GM12878 (cell line): ENCODE measurements at regions of chr10 and their contacts with region 1.

Region 1: GRCh38 chr10:11270135-11270857 is 252.6 kb downstream of the CELF2 start:
- DNase-seq: peak; percentile 60
- ATAC-seq: peak; percentile 97
- H3K4me3 ChIP-seq: peak overlapping the region; percentile 20; the same call in 1 of the 2 replicates
- H3K27ac ChIP-seq: peak overlapping the region; percentile 76
- H3K4me1 ChIP-seq: peaks cover 52% of the 10 kb centered on the region
- H3K27me3 ChIP-seq: no peaks in the 10 kb centered on the region
- CTCF ChIP-seq: peak; percentile 98 to 99 (median 99); a peak in 5 of 6 replicates
- EP300 ChIP-seq: no peak
- POLR2A ChIP-seq: peak; percentile 76
- RAD21 ChIP-seq: peak; percentile 98

Region 2: DNA sequence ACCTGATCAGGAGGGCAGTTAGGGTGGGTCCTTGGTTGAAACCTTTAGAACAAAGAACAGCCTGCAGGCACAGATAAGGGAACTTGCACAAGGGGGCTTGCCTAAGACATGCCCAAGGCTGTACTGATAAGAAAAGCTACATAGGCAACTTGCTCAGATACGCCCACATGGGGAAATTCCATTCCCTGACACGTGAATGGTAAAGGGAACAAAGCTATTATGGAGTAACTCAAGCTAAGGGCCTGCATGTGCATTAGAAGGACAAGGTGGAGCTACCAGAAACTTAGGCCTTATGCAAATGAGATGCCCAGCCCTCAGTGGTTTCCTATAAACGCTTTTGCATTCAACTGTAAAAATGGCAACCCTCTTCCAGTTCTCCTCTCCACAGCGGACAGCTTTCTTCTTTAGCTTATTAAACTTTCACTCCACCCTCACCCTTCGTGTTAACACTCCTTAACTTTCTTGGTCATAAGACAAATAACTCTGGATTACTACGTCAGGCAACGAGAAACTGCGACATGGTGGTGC is 1444.7 kb before region 1 on chr10:
- CTCF ChIA-PET with region 1: no interaction called
- POLR2A ChIA-PET with region 1: no interaction called
- RAD21 ChIA-PET with region 1: no interaction called
- SMC1A ChIA-PET with region 1: no interaction called
- in situ Hi-C with region 1: no loop called
- intact Hi-C with region 1: no loop called
- DNase-seq: no peak
- ATAC-seq: peak; percentile 59
- H3K4me3 ChIP-seq: no peak overlapping the region
- H3K27ac ChIP-seq: no peak overlapping the region
- H3K4me1 ChIP-seq: no peaks in the 10 kb centered on the region
- H3K27me3 ChIP-seq: no peaks in the 10 kb centered on the region
- CTCF ChIP-seq: no peak
- EP300 ChIP-seq: no peak
- POLR2A ChIP-seq: no peak
- RAD21 ChIP-seq: no peak

Region 3: DNA sequence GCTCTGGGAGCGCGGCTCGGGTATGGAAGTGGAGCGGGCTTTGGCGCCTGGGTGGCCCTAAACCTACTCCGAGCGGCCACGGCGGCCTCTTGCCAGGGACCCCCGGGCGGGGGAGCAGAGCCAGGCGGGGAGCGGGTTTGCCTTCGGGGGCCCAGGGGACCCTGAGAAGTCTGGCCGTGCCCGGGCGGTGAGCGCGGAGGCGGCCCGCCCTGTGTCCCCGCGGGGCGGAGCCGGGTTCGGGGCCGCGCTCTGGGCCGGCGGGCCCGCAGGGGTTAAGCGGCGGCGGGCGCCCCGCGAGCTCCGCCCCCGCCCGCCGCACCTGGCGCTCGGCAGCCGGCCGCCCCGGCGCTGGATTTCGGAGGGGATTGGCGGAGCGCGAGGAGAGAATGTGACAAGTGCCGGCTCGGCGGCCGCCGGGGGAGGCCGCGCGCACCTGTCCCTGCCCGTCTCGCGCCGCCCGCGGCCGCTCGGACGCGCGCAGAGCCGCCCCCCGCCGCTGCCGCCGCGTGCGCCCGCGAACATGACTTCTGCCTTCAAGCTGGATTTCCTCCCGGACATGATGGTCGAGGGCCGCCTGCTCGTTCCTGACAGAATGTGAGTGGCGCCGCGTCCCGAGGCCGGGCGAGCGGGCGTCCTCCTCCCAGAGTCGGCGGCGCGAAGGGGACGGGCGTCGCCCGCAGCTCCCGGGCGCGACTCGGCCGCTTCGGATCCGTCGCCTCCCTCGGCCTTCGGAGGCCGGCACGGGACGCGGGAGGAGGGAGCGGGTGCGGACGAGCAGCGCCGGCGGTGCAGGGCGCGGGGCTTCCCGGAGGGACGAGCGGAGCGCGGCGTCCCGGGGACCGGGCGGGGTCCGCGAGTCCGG is 252.5 kb before region 1 on chr10 and contains the start of gene CELF2:
- CTCF ChIA-PET with region 1: interaction called, 4 read pairs
- POLR2A ChIA-PET with region 1: no interaction called
- RAD21 ChIA-PET with region 1: no interaction called
- SMC1A ChIA-PET with region 1: no interaction called
- in situ Hi-C with region 1: no loop called
- intact Hi-C with region 1: loop called (anchors 10 kb)
- DNase-seq: no peak
- ATAC-seq: peak; percentile 77
- H3K4me3 ChIP-seq: peak within 1 kb of the TSS; percentile 67; the same call in 1 of the 2 replicates
- H3K27ac ChIP-seq: no peak within 1 kb of the TSS
- H3K4me1 ChIP-seq: no peaks in the 10 kb centered on the region
- H3K27me3 ChIP-seq: peaks cover 2 to 25% of the 10 kb centered on the region in 2 experiments; a peak in 3 of 4 replicates
- CTCF ChIP-seq: no peak
- EP300 ChIP-seq: no peak
- POLR2A ChIP-seq: 0 out of 2 replicates have a peak, but pooled peaks have one; percentile 23
- RAD21 ChIP-seq: no peak
- polyA plus RNA-seq, gene CELF2: 20.8 to 27.1 TPM

Region 4: GRCh38 chr10:11145495-11145855 is 124.8 kb before region 1 on chr10:
- CTCF ChIA-PET with region 1: interaction called, 39 read pairs
- POLR2A ChIA-PET with region 1: interaction called, 3 read pairs
- RAD21 ChIA-PET with region 1: interaction called, 22 read pairs
- SMC1A ChIA-PET with region 1: interaction called, 23 read pairs
- in situ Hi-C with region 1: no loop called
- intact Hi-C with region 1: no loop called
- DNase-seq: no peak
- ATAC-seq: peak; percentile 92
- H3K4me3 ChIP-seq: peak overlapping the region; percentile 25; the same call in 1 of the 2 replicates
- H3K27ac ChIP-seq: peak overlapping the region; percentile 68
- H3K4me1 ChIP-seq: peaks cover 16% of the 10 kb centered on the region
- H3K27me3 ChIP-seq: no peaks in the 10 kb centered on the region
- CTCF ChIP-seq: no peak
- EP300 ChIP-seq: no peak
- POLR2A ChIP-seq: peak; percentile 25; the same call in 1 of the 2 replicates
- RAD21 ChIP-seq: no peak

Region 5: GRCh38 chr10:11178606-11179515 is 91.4 kb before region 1 on chr10:
- CTCF ChIA-PET with region 1: interaction called, 114 read pairs
- POLR2A ChIA-PET with region 1: interaction called, 11 read pairs
- RAD21 ChIA-PET with region 1: interaction called, 53 read pairs
- SMC1A ChIA-PET with region 1: interaction called, 87 read pairs
- in situ Hi-C with region 1: no loop called
- intact Hi-C with region 1: loop called (anchors 1 kb)
- DNase-seq: peak; percentile 98
- ATAC-seq: peak; percentile 85
- H3K4me3 ChIP-seq: peak overlapping the region; percentile 57
- H3K27ac ChIP-seq: peak overlapping the region; percentile 95
- H3K4me1 ChIP-seq: peaks cover 71% of the 10 kb centered on the region
- H3K27me3 ChIP-seq: no peaks in the 10 kb centered on the region
- CTCF ChIP-seq: no peak
- EP300 ChIP-seq: peak; percentile 95 to 99
- POLR2A ChIP-seq: 0 out of 2 replicates have a peak, but pooled peaks have one; percentile 46
- RAD21 ChIP-seq: 0 out of 2 replicates have a peak, but pooled peaks have one; percentile 2

Region 6: GRCh38 chr10:11225935-11226334 is 44.4 kb before region 1 on chr10:
- CTCF ChIA-PET with region 1: interaction called, 22 read pairs
- POLR2A ChIA-PET with region 1: no interaction called
- RAD21 ChIA-PET with region 1: interaction called, 15 read pairs
- SMC1A ChIA-PET with region 1: interaction called, 4 read pairs
- in situ Hi-C with region 1: no loop called
- intact Hi-C with region 1: no loop called
- DNase-seq: no peak
- ATAC-seq: peak; percentile 79
- H3K4me3 ChIP-seq: 0 out of 2 replicates have a peak overlapping the region, but pooled peaks have one; percentile 8
- H3K27ac ChIP-seq: peak overlapping the region; percentile 77
- H3K4me1 ChIP-seq: peaks cover 62% of the 10 kb centered on the region
- H3K27me3 ChIP-seq: no peaks in the 10 kb centered on the region
- CTCF ChIP-seq: no peak
- EP300 ChIP-seq: 0 out of 4 replicates have a peak, but pooled peaks of 1 of the 2 experiments have one; percentile 23
- POLR2A ChIP-seq: no peak
- RAD21 ChIP-seq: no peak

Region 7: DNA sequence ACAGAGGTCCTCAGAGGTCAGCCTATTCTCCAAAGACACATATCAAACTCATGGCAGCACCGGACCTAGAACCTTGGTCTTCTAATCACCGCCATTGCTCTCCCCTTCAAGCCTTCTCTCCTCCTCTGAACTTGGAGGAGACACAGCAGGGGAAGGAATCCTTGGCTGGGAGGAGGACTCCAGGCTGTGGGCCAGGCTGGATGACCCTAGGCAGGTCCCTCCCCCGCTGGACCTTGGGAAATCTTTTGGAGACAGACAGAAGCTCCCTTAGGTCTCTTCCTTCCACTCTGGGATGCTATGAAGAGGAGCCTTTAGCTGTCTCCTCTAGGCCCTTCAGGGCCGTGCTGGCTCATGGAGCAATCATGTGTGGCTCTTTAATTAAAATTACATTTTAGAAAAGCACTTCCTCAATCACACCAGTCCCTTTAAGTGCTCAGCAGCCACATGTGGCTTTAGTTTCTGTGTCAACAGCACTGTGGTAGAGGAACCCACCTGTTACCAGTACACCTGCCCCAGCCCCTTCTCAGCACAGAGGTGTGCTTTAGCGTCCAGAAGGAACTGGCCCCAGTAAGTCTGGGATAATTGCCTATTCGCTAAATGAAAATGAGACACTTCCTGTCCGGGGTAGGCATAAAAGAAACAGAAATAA is 14.4 kb before region 1 on chr10:
- CTCF ChIA-PET with region 1: interaction called, 26 read pairs
- POLR2A ChIA-PET with region 1: interaction called, 3 read pairs
- RAD21 ChIA-PET with region 1: interaction called, 30 read pairs
- SMC1A ChIA-PET with region 1: interaction called, 22 read pairs
- in situ Hi-C with region 1: no loop called
- intact Hi-C with region 1: no loop called
- DNase-seq: no peak
- ATAC-seq: peak; percentile 68
- H3K4me3 ChIP-seq: no peak overlapping the region
- H3K27ac ChIP-seq: peak overlapping the region; percentile 54
- H3K4me1 ChIP-seq: peaks cover 47% of the 10 kb centered on the region
- H3K27me3 ChIP-seq: no peaks in the 10 kb centered on the region
- CTCF ChIP-seq: no peak
- EP300 ChIP-seq: peak in 1 of 2 experiments; percentile 22; a peak in 1 of 4 replicates
- POLR2A ChIP-seq: no peak; the same call in 1 of the 2 replicates
- RAD21 ChIP-seq: no peak

Region 8: GRCh38 chr10:11318826-11319599 is 48.7 kb after region 1 on chr10:
- CTCF ChIA-PET with region 1: no interaction called
- POLR2A ChIA-PET with region 1: no interaction called
- RAD21 ChIA-PET with region 1: no interaction called
- SMC1A ChIA-PET with region 1: no interaction called
- in situ Hi-C with region 1: no loop called
- intact Hi-C with region 1: no loop called
- DNase-seq: no peak
- ATAC-seq: no peak
- H3K4me3 ChIP-seq: no peak overlapping the region
- H3K27ac ChIP-seq: no peak overlapping the region
- H3K4me1 ChIP-seq: peaks cover 26% of the 10 kb centered on the region
- H3K27me3 ChIP-seq: no peaks in the 10 kb centered on the region
- CTCF ChIP-seq: no peak; a peak in 1 of 6 replicates
- EP300 ChIP-seq: no peak
- POLR2A ChIP-seq: peak; percentile 52; the same call in 1 of the 2 replicates
- RAD21 ChIP-seq: no peak

Region 9: DNA sequence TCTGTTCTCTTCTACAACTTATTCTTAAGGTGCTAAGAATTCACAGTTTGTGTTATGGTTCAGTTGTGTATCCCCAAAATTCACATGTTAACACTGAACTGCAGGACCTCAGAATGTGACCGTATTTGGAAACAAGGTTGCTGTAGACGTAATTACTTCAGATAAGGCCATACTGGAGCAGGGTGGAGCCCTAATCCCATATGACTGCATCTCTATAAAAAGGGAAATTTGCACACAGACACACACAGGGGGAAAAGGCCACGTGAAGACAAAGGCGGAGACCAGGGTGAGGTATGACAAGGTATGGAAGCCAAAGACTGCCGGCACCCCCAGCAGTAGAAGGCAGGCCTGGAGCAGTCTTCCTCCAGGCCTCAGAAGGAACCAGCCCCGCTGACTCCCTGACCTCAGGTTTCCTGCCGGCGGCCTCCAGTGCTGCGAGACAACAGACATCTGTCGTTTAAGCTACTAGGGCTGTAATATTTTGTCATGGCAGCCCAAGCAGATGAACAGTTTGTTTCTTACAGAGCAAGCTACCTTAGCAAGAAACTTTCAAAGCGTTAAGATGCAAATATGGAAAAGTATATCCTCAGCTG is 651.6 kb after region 1 on chr10:
- CTCF ChIA-PET with region 1: no interaction called
- POLR2A ChIA-PET with region 1: no interaction called
- RAD21 ChIA-PET with region 1: no interaction called
- SMC1A ChIA-PET with region 1: no interaction called
- in situ Hi-C with region 1: no loop called
- intact Hi-C with region 1: no loop called
- DNase-seq: no peak
- ATAC-seq: no peak
- H3K4me3 ChIP-seq: no peak overlapping the region
- H3K27ac ChIP-seq: no peak overlapping the region
- H3K4me1 ChIP-seq: no peaks in the 10 kb centered on the region
- H3K27me3 ChIP-seq: no peaks in the 10 kb centered on the region
- CTCF ChIP-seq: no peak
- EP300 ChIP-seq: no peak
- POLR2A ChIP-seq: no peak
- RAD21 ChIP-seq: no peak

Region 10: DNA sequence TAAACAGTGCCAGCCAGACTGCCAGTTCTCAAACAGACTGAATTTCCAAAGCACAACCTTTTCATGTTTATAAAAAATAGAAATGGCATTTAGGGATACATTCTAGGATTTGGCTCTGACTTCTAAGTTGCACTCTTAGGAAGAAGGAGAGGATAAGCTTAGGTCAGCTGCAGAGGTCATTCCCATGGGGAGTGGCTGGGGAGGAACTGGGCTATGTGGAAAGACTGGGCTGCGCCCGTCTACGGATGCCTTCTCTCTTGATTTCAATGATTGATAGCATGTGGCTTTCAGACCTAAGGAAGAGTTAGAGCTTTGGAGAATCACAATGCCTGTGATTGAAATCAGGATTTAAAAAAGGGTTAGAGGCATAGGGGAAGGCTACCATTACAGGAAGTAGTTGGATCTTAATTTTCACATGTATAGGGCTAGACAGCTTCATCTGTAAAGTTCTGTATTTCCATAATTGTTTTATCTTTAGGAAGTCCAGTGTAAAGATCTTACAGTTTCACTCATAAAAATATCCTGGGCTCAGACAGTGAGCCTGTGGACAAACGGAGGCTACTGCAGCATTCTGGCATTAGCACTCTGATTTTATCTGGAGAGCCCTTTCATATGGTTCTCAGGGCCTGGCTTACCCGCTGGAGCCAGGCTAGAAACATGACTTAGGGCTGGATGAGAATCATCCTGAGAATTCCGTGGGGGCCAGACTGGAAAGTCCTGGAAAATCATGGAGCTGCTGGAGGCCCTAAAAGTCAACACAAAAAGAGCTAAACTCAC is 895.9 kb after region 1 on chr10:
- CTCF ChIA-PET with region 1: no interaction called
- POLR2A ChIA-PET with region 1: no interaction called
- RAD21 ChIA-PET with region 1: no interaction called
- SMC1A ChIA-PET with region 1: no interaction called
- in situ Hi-C with region 1: no loop called
- intact Hi-C with region 1: no loop called
- DNase-seq: no peak
- ATAC-seq: no peak
- H3K4me3 ChIP-seq: no peak overlapping the region
- H3K27ac ChIP-seq: no peak overlapping the region
- H3K4me1 ChIP-seq: no peaks in the 10 kb centered on the region
- H3K27me3 ChIP-seq: no peaks in the 10 kb centered on the region
- CTCF ChIP-seq: no peak
- EP300 ChIP-seq: no peak
- POLR2A ChIP-seq: no peak
- RAD21 ChIP-seq: no peak